CD4-positive, alpha-beta T cell (primary cell): ENCODE measurements at regions of chr2 and their contacts with region 1.

Region 1: GRCh38 chr2:12870672-12871071 is 153.9 kb downstream of the TRIB2 start:
- DNase-seq: no peak
- ATAC-seq: no peak
- H3K4me3 ChIP-seq: no peak overlapping the region
- H3K4me3 Mint-ChIP-seq: no peak overlapping the region
- H3K27ac ChIP-seq: no peak overlapping the region
- H3K27ac Mint-ChIP-seq: no peak overlapping the region
- H3K4me1 ChIP-seq: no peaks in the 10 kb centered on the region
- H3K4me1 Mint-ChIP-seq: no peaks in the 10 kb centered on the region
- H3K27me3 ChIP-seq: peaks cover 0 to 3% of the 10 kb centered on the region in 2 experiments
- H3K27me3 Mint-ChIP-seq: peaks cover 10% of the 10 kb centered on the region
- CTCF ChIP-seq: no peak

Region 2: DNA sequence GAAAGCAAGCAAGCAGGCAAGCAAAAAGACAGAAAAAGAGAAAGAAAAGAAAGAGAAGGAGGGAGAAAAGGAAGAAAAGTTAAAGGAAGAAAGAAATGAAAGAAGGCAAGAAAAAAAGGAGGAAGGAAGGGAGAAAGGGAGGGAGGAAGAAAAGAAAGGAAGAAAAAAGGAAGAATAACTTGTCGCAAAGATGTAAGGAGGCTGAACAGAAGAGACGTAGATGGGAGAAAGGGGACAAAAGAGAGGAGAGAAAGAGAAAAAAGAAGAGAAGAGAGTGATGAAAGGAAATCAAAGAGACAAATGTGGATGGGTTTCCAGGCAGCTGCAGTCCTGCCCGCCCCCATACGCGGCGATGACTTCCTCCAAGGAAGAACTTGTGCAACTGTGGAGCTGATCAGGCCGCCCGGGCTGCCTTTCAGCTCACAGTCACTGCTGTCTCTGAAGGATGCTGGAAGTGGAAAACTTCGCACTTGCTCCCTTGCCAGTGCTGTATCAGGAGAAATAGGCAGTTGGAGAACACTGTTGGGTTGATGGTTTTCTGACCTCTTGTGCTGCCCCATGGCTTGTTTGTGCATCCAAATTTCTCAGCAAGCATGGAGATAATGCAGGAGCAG is 101.1 kb before region 1 on chr2:
- CTCF ChIA-PET with region 1: no interaction called
- POLR2A ChIA-PET with region 1: no interaction called
- intact Hi-C with region 1: no loop called
- DNase-seq: no peak
- ATAC-seq: no peak
- H3K4me3 ChIP-seq: no peak overlapping the region
- H3K4me3 Mint-ChIP-seq: no peak overlapping the region
- H3K27ac ChIP-seq: no peak overlapping the region
- H3K27ac Mint-ChIP-seq: no peak overlapping the region
- H3K4me1 ChIP-seq: no peaks in the 10 kb centered on the region
- H3K4me1 Mint-ChIP-seq: no peaks in the 10 kb centered on the region
- H3K27me3 ChIP-seq: peaks cover 0 to 5% of the 10 kb centered on the region in 2 experiments
- H3K27me3 Mint-ChIP-seq: peaks cover 32% of the 10 kb centered on the region
- CTCF ChIP-seq: no peak

Region 3: DNA sequence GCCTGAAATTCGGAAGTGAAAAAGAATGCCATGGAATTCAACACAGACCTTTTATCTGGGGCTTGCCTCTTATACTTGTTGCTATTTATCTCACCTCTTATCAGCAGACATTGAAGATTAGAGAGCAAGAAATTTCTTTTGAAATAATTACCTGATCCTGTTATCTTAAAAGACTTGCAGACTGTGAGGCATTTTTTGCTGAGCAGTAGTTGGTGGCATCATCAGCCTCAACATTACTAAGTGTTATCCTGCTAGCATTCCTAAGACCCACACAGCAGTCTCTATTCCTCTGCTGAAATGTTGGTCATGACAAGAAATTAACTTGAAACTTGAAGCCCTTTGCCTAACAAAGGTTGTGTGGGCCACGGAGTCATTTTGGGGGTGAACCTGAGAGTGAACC is 32.6 kb after region 1 on chr2:
- CTCF ChIA-PET with region 1: no interaction called
- POLR2A ChIA-PET with region 1: no interaction called
- intact Hi-C with region 1: loop called in 1 of 2 experiments (anchors 5 kb)
- DNase-seq: no peak
- ATAC-seq: no peak
- H3K4me3 ChIP-seq: no peak overlapping the region
- H3K4me3 Mint-ChIP-seq: no peak overlapping the region
- H3K27ac ChIP-seq: no peak overlapping the region
- H3K27ac Mint-ChIP-seq: no peak overlapping the region
- H3K4me1 ChIP-seq: no peaks in the 10 kb centered on the region
- H3K4me1 Mint-ChIP-seq: peaks cover 8% of the 10 kb centered on the region
- H3K27me3 ChIP-seq: no peaks in the 10 kb centered on the region
- H3K27me3 Mint-ChIP-seq: no peaks in the 10 kb centered on the region
- CTCF ChIP-seq: no peak

Region 4: DNA sequence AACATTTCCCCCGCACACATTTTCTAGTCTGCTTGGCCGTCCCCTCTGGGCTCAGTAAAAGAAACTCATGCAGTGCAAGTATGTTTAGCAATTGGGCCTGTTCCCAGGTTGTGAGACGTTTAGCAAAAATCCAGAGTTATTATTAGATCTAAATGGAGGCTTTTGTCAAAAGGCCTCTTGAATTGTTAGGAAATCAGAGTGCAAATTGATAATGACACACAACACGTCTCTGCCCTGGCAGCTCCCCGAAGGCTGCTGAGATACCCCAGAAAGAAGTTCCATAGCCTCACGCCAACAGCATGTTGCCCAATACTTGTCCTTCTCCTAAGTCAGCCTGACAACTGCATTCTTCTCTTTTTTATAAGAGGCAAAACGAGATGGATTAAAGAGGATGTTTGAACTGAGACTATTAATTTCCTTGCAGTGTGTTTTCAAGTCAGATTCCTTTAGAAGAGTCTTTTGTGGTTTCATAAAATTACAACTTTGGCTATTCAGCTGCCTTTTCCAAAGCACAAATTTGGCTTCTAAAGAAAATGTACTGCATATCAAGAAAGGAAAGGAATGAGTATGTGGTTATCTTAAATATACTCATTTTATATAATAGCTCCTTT is 48.3 kb after region 1 on chr2:
- CTCF ChIA-PET with region 1: no interaction called
- POLR2A ChIA-PET with region 1: no interaction called
- intact Hi-C with region 1: no loop called
- DNase-seq: no peak
- ATAC-seq: no peak
- H3K4me3 ChIP-seq: no peak overlapping the region
- H3K4me3 Mint-ChIP-seq: no peak overlapping the region
- H3K27ac ChIP-seq: no peak overlapping the region
- H3K27ac Mint-ChIP-seq: no peak overlapping the region
- H3K4me1 ChIP-seq: no peaks in the 10 kb centered on the region
- H3K4me1 Mint-ChIP-seq: no peaks in the 10 kb centered on the region
- H3K27me3 ChIP-seq: peaks cover 0 to 3% of the 10 kb centered on the region in 2 experiments
- H3K27me3 Mint-ChIP-seq: peaks cover 4% of the 10 kb centered on the region
- CTCF ChIP-seq: no peak